ENCODE measurements at regions of chr5 and their contacts with region 1.

Region 1: GRCh38 chr5:40755407-40756365 is at the start of gene TTC33:
- DNase-seq: peak; percentile 91
- ATAC-seq: peak; percentile 97
- H3K4me3 ChIP-seq: peak within 1 kb of the TSS; percentile 65 to 94 (median 86)
- H3K27ac ChIP-seq: peak within 1 kb of the TSS; percentile 70
- H3K4me1 ChIP-seq: peaks cover 21% of the 10 kb centered on the region
- H3K27me3 ChIP-seq: no peaks in the 10 kb centered on the region; a peak in 1 of 5 replicates
- CTCF ChIP-seq: peak; percentile 96
- EP300 ChIP-seq: no peak
- POLR2A ChIP-seq: peak; percentile 34 to 37; a peak in 3 of 4 replicates
- RAD21 ChIP-seq: peak; percentile 80
- total RNA-seq, gene TTC33: 20.0 and 37.9 TPM in 2 replicates

Region 2: GRCh38 chr5:40834849-40835787 is 79.4 kb after region 1 on chr5 and contains the start of gene RPL37:
- CTCF ChIA-PET with region 1: no interaction called
- POLR2A ChIA-PET with region 1: no interaction called
- in situ Hi-C with region 1: loop called (anchors 5 kb)
- intact Hi-C with region 1: loop called (anchors 2 kb)
- DNase-seq: peak; percentile 94
- ATAC-seq: peak; percentile 98
- H3K4me3 ChIP-seq: peak within 1 kb of the TSS; percentile 61 to 82 (median 82)
- H3K27ac ChIP-seq: peak within 1 kb of the TSS; percentile 84
- H3K4me1 ChIP-seq: peaks cover 46% of the 10 kb centered on the region
- H3K27me3 ChIP-seq: no peaks in the 10 kb centered on the region; a peak in 1 of 5 replicates
- CTCF ChIP-seq: peak; percentile 48
- EP300 ChIP-seq: peak in 1 of 2 experiments; percentile 27; a peak in 1 of 4 replicates
- POLR2A ChIP-seq: peak; percentile 98 to 99
- RAD21 ChIP-seq: no peak; the same call in 1 of the 2 replicates
- total RNA-seq, gene RPL37: 1,981 and 2,192 TPM in 2 replicates

Region 3: GRCh38 chr5:40879163-40879942 is 123.7 kb after region 1 on chr5:
- CTCF ChIA-PET with region 1: no interaction called
- POLR2A ChIA-PET with region 1: no interaction called
- in situ Hi-C with region 1: loop called (anchors 5 kb)
- intact Hi-C with region 1: loop called (anchors 1 kb)
- DNase-seq: peak; percentile 10
- ATAC-seq: peak; percentile 33; the same call in 1 of the 3 replicates
- H3K4me3 ChIP-seq: no peak overlapping the region
- H3K27ac ChIP-seq: no peak overlapping the region
- H3K4me1 ChIP-seq: peaks cover 15% of the 10 kb centered on the region
- H3K27me3 ChIP-seq: no peaks in the 10 kb centered on the region
- CTCF ChIP-seq: peak; percentile 51
- EP300 ChIP-seq: no peak
- POLR2A ChIP-seq: no peak
- RAD21 ChIP-seq: 0 out of 2 replicates have a peak, but pooled peaks have one; percentile 27

Region 4: DNA sequence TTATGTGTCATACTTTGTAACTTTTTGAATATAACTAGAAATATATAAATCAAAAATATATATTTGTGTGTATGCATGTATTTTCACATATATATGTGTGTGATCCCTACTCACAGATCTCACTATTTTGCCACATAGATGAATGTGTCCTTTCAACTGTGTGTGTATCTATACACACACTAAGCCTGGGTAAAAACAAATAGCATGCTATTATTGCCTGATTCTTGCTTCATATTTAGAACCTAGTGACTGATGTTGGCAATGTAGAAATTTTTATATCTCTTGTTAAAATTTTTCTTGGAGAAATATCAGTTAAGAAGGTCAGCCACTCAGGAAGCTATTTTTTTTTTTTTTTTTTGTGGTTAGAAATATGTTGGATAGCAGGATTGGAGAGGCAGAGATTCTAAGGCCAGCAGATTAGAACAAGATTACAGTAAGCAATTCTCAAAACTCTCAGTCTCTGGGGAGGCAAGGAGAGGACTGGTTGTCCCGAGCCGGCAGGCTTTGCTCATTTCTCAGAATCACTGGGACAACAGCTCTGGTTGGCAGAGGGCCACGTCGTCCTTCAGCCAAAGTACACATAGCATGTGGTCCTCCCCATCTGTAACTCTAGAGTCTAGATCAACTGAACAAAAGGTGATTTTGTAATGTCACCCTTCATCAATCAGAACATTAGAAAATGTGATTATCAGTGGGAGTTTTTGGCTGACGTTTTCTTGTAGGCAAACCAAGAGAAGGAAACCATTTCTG is 437.9 kb after region 1 on chr5:
- CTCF ChIA-PET with region 1: no interaction called
- POLR2A ChIA-PET with region 1: no interaction called
- in situ Hi-C with region 1: no loop called
- intact Hi-C with region 1: no loop called
- DNase-seq: peak; percentile 58
- ATAC-seq: peak; percentile 75
- H3K4me3 ChIP-seq: no peak overlapping the region
- H3K27ac ChIP-seq: no peak overlapping the region
- H3K4me1 ChIP-seq: peaks cover 7% of the 10 kb centered on the region; the same call in 1 of the 2 replicates
- H3K27me3 ChIP-seq: no peaks in the 10 kb centered on the region
- CTCF ChIP-seq: no peak
- EP300 ChIP-seq: no peak
- POLR2A ChIP-seq: no peak
- RAD21 ChIP-seq: no peak